Activated CD4-positive, alpha-beta memory T cell treated with anti-CD3 and anti-CD28 coated beads, Interleukin-2, amount 10 ng/mL, durations not matched to agents 7 days and 5 days (primary cell): ENCODE measurements at regions of chr19 and their contacts with region 1.

Region 1: GRCh38 chr19:56393119-56394012 is at the start of gene ZNF582:
- DNase-seq: peak; percentile 93
- H3K4me3 Mint-ChIP-seq: peak within 1 kb of the TSS; percentile 81
- H3K27ac Mint-ChIP-seq: peak within 1 kb of the TSS; percentile 96
- H3K4me1 Mint-ChIP-seq: peaks cover 14% of the 10 kb centered on the region
- H3K27me3 Mint-ChIP-seq: no peaks in the 10 kb centered on the region
- total RNA-seq, gene ZNF582: 0.93 to 1.5 TPM

Region 2: DNA sequence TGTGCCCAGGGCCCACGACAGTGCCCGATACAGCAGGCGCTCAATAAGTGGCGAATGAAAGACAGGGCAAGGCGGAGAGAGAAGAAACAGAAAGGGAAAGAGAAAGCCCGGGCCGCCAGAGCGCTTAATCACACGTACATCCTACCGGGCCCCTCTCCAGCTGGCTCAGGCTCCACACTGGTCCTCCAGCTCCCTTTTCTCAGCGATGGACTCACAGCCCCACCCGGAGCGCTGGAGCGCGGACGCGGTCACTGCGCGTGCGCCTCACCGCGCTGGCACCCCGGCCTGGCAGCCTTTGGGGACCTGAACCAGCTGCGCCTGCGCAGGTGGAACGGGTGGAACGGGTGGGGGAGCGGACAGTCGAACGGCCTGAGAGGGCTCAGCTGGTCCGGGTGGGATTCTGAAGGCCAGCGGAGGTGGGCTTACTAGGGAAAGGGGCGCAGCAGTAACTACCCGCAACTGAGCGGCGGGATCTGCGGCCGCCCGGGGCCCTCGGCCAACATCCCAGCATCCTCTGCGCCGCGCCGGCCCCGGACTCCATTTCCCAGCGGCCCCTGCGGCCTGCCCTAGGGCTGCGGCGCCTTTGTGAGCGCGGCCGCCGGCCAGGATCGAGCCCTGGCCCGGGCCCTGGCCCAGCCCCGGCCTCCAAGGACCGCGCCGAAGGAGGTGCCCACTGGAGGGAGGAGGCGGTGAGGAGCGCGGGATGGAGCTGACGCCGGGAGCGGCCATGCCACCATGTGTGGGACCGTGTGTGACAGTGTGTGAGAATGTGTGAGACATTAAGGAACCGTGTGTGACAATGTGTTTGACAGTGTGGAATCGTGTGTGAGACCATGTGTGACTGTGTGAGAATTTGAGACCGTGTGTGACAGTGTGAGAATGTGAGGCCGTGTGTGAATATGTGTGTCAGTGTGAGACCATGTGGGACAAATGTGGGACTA is 10.7 kb after region 1 on chr19 and contains the start of gene ZNF583:
- CTCF ChIA-PET with region 1: interaction called, 13 read pairs
- POLR2A ChIA-PET with region 1: interaction called, 10 read pairs
- DNase-seq: peak; percentile 91
- H3K4me3 Mint-ChIP-seq: peak within 1 kb of the TSS; percentile 77
- H3K27ac Mint-ChIP-seq: peak within 1 kb of the TSS; percentile 90
- H3K4me1 Mint-ChIP-seq: peaks cover 27% of the 10 kb centered on the region
- H3K27me3 Mint-ChIP-seq: no peaks in the 10 kb centered on the region
- total RNA-seq, gene ZNF583: 3.9 to 4.1 TPM